Activated naive CD4-positive, alpha-beta T cell treated with anti-CD3 and anti-CD28 coated beads for 36 hours (primary cell): ENCODE measurements at regions of chr2 and their contacts with region 1.

Region 1: DNA sequence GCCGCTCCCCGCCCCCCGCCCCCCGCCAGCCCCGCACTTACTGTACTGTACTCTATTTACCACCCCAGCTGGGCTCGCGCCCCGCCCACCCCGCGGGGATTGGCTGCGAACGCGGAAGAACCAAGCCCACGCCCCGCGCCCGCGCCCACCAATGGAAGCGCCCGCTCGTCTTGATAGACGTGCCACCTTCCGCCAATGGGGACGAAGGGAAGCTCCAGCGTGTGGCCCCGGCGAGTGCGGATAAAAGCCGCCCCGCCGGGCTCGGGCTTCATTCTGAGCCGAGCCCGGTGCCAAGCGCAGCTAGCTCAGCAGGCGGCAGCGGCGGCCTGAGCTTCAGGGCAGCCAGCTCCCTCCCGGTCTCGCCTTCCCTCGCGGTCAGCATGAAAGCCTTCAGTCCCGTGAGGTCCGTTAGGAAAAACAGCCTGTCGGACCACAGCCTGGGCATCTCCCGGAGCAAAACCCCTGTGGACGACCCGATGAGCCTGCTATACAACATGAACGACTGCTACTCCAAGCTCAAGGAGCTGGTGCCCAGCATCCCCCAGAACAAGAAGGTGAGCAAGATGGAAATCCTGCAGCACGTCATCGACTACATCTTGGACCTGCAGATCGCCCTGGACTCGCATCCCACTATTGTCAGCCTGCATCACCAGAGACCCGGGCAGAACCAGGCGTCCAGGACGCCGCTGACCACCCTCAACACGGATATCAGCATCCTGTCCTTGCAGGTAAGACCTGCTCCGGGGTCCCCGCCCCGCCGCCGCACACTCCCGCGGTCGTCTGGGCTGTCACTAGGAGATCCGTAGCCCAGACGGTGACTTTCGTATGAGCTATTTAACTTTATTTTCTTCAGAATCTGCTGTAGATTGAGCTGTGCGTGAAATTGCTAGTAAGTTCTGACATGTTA is at the start of gene ID2:
- DNase-seq: peak; percentile 98
- H3K4me3 Mint-ChIP-seq: peak within 1 kb of the TSS; percentile 96
- H3K27ac Mint-ChIP-seq: peak within 1 kb of the TSS; percentile 91
- H3K4me1 Mint-ChIP-seq: peaks cover 31% of the 10 kb centered on the region
- H3K27me3 Mint-ChIP-seq: peaks cover 18% of the 10 kb centered on the region
- total RNA-seq, gene ID2: 73.9 to 81.9 TPM

Region 2: GRCh38 chr2:7097348-7097895 is 1584.6 kb before region 1 on chr2:
- CTCF ChIA-PET with region 1: no interaction called
- intact Hi-C with region 1: loop called (anchors 1 kb)
- DNase-seq: peak; percentile 84
- H3K4me3 Mint-ChIP-seq: peak overlapping the region; percentile 58
- H3K27ac Mint-ChIP-seq: no peak overlapping the region
- H3K4me1 Mint-ChIP-seq: peaks cover 7% of the 10 kb centered on the region
- H3K27me3 Mint-ChIP-seq: no peaks in the 10 kb centered on the region

Region 3: DNA sequence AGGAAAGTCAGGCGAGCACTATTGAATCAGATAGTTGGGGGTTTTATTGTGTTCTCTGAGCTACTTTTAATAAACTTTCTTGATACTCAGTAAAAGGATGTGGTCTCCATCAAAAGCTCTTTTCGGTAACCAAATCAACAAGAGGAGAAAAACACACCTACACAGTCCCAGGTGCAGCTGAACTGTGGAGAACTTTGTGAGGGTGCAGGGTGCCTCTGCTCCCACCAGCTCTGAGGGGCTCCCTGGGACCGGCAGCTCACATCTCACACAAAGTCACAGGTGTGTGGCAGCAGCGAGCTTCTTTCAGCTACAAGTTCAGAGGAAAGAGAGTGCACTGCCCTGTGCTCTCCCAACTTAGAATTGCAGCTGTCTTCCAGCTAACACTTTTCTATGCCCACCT is 1114.4 kb before region 1 on chr2:
- CTCF ChIA-PET with region 1: no interaction called
- intact Hi-C with region 1: loop called (anchors 5 kb)
- DNase-seq: peak; percentile 82
- H3K4me3 Mint-ChIP-seq: peak overlapping the region; percentile 36
- H3K27ac Mint-ChIP-seq: peak overlapping the region; percentile 82
- H3K4me1 Mint-ChIP-seq: peaks cover 58% of the 10 kb centered on the region
- H3K27me3 Mint-ChIP-seq: no peaks in the 10 kb centered on the region

Region 4: DNA sequence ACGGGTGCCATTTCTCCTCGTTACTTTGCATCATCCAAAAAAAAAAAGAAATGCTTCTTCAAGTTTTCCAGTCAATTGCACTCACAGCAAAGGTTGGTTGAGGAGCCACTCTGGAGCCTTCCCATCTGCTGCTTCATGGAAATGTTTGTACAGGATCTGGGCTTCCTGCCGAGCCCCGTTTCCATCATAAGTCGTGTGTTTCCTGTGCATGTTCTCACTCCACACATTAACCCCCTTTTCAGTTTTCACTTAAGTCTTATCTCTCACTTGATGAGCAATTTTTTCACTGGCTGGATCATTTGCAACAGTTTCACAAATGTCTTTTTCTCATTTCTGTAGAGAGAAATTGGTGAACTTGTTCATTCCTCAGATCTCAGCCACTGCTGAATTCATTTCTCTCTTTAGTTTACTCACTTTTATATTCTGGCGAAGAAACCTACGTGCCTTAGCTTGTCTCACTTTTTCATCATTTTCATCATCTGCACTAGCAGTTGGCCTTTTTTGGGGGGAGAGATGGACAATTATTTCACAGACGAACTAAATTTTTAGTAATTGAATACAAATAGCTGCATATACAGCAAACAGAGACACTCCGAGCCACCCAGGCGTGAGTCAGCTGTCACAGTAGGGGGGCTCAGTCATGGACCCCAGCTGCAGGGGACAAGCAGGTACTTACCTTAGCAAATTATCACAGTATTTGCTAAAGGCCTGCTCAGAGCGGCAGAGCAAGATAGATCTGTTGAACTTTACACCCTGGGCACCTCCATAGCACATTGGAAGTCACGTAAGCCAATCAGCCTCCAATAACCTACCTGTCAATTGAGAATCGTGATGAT is 751.0 kb before region 1 on chr2:
- CTCF ChIA-PET with region 1: no interaction called
- intact Hi-C with region 1: loop called (anchors 5 kb)
- DNase-seq: peak; percentile 45
- H3K4me3 Mint-ChIP-seq: no peak overlapping the region
- H3K27ac Mint-ChIP-seq: peak overlapping the region; percentile 74
- H3K4me1 Mint-ChIP-seq: peaks cover 19% of the 10 kb centered on the region
- H3K27me3 Mint-ChIP-seq: no peaks in the 10 kb centered on the region

Region 5: DNA sequence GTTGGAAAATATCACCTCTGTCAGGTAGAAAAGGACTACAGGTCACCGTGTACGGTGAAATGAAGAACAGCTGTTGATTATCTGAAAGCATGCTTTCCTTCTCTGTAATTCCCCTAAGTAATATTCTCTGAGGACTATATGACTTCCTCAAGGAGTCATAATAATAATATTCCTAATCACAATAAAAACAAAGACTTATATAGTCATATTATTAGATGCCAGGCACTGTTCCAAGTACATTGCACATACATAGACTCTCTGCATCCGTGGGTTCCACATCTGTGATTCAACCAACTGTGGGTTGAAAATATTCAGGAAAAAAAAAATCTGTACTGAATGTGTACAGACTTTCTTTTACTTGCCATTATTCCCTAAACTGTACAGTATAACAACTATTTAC is 512.6 kb before region 1 on chr2:
- CTCF ChIA-PET with region 1: no interaction called
- intact Hi-C with region 1: no loop called
- DNase-seq: no peak
- H3K4me3 Mint-ChIP-seq: no peak overlapping the region
- H3K27ac Mint-ChIP-seq: no peak overlapping the region
- H3K4me1 Mint-ChIP-seq: peaks cover 10% of the 10 kb centered on the region
- H3K27me3 Mint-ChIP-seq: peaks cover 1% of the 10 kb centered on the region

Region 6: DNA sequence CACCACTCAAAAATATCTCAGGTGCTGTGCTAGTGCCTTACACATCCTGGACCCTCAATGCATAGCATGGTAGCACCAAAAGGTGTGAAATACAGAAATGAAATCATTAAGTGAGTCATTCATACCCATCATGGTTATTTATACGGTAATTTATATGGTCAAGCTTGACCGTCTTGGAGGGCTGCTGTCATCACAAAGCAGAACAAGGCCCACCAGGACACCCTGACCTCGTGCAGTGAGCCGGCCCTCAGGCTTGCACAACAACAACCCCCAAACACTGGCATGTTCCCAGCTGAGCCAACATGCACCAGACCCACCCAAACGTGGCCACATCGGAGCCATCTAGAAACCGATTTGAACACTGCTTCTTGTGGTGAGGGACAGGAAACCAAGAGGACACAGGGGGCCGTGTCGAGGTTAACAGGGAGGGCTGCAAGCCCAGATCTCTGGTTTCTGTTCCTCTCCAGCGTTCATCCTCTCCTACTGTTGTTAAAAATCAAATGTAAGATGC is 378.7 kb before region 1 on chr2:
- CTCF ChIA-PET with region 1: no interaction called
- intact Hi-C with region 1: loop called (anchors 2 kb)
- DNase-seq: peak; percentile 69
- H3K4me3 Mint-ChIP-seq: no peak overlapping the region
- H3K27ac Mint-ChIP-seq: no peak overlapping the region
- H3K4me1 Mint-ChIP-seq: peaks cover 39% of the 10 kb centered on the region
- H3K27me3 Mint-ChIP-seq: peaks cover 5% of the 10 kb centered on the region

Region 7: DNA sequence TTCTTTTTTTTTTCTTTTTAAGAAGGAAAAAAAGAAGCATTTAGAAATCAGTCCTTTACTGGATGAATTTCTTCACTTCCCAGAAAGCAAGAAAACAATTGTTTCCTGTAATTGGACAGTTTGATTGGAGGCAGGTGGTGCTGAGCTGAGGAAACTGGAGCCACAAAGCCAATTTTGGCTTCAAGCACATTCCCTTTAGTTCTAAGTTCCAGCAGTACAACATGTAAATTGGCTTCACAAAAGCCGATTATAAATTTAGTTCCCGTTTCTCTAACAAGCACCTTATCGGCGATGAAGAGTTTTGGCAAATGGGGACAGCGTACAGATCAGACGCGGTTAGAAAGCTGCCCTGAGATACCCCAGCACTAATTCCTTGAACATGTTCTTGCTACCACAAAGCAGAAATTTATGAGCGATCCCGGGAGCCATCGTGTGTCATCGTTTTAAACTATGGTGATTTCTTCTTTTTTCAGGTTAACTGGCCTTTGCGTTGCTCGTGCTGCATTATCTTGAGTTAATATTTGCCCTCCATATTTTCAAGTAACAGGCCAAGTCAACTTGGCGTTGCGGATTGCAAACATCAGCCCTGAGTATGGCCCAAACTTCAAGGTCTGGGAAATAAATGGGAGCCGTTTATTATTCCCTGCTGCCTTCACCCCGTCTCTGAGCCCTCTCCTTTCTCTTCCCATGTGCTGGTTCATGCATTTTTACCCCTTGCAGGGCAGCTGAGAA is 190.6 kb before region 1 on chr2:
- CTCF ChIA-PET with region 1: no interaction called
- intact Hi-C with region 1: no loop called
- DNase-seq: no peak
- H3K4me3 Mint-ChIP-seq: no peak overlapping the region
- H3K27ac Mint-ChIP-seq: no peak overlapping the region
- H3K4me1 Mint-ChIP-seq: peaks cover 21% of the 10 kb centered on the region
- H3K27me3 Mint-ChIP-seq: no peaks in the 10 kb centered on the region

Region 8: DNA sequence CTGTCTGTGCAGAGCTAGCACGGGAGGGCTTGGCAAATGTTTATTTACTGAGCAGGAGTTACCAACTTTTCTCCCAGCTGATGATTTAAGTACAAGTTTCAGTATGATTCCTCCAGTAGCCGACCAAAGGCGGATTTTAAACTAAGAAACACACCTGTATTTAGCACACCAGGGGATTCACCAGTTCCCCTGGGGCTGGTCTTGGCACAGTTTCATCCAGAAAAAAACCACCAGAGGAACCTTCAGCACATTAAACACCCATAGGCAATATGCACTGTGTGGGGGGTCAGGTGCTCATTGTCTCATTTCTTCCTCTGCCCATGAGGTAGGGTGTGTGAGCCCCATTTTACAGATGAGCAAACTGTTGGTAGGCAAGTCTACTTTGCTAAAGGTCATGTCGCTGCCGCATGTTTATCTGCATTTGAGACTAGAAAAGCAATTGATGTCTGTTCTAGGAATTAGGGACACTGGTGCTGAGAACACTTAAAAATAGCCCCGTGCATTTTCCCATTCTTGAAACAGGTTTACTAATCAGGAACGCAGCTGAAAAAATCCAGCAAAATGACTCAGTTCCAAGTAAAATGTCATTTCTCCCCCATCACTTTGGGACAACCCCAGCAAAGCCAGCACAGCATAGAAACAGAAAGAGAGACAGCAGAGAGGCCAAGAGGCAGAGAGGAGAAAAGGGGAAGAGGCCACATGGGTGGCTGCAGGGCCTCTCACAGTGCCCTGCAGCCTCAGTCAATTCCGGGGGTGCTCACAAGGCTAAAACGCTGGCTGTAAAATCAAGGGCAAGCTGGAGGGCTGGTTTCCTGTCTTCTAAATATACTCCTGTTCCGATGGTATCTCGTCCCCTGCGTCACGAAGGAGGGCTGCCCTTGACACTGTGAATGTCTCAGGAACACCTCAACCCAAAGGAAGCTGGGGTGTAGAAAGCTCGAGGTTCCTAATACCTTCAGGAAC is 167.0 kb before region 1 on chr2:
- CTCF ChIA-PET with region 1: interaction called, 3 read pairs
- intact Hi-C with region 1: loop called (anchors 1 kb)
- DNase-seq: peak; percentile 84
- H3K4me3 Mint-ChIP-seq: peak overlapping the region; percentile 42
- H3K27ac Mint-ChIP-seq: peak overlapping the region; percentile 96
- H3K4me1 Mint-ChIP-seq: peaks cover 46% of the 10 kb centered on the region
- H3K27me3 Mint-ChIP-seq: no peaks in the 10 kb centered on the region

Region 9: DNA sequence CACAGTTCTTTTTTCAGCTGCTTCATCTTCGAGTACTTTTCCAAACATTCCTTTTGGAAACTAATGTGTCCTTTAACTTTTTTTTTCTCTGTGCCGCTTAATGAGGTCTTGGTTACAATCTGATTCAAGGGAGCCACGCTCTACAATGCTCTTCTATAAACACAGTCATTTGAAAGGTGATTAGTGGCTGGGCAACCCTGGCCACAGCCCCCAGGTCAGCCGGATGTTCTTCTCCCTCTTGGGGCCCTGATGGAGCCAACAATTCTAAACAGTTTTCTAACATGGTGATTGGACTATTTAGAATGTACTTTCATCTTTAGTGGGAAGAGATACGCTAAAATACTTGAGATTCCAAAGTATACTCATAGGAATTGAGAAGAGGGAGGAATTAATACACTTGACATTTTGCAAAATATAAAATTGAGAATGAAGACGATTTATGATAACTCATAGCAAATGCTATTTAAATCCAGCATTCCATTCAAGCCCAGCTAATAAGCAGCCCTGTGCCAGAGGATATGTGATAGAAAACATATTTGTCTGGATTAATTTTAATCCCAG is 405.2 kb after region 1 on chr2:
- CTCF ChIA-PET with region 1: no interaction called
- intact Hi-C with region 1: no loop called
- DNase-seq: no peak
- H3K4me3 Mint-ChIP-seq: no peak overlapping the region
- H3K27ac Mint-ChIP-seq: no peak overlapping the region
- H3K4me1 Mint-ChIP-seq: no peaks in the 10 kb centered on the region
- H3K27me3 Mint-ChIP-seq: peaks cover 3% of the 10 kb centered on the region

Region 10: GRCh38 chr2:10122386-10123280 is 1440.6 kb after region 1 on chr2 and contains the start of gene RRM2:
- CTCF ChIA-PET with region 1: no interaction called
- intact Hi-C with region 1: loop called (anchors 5 kb)
- DNase-seq: peak; percentile 98
- H3K4me3 Mint-ChIP-seq: peak within 1 kb of the TSS; percentile 99
- H3K27ac Mint-ChIP-seq: peak within 1 kb of the TSS; percentile 99
- H3K4me1 Mint-ChIP-seq: peaks cover 27% of the 10 kb centered on the region
- H3K27me3 Mint-ChIP-seq: no peaks in the 10 kb centered on the region
- total RNA-seq, gene RRM2: 466 to 514 TPM